ENCODE measurements at regions of chr4 and their contacts with region 1.

Region 1: GRCh38 chr4:4395849-4396637 is 9.1 kb downstream of the NSG1 start:
- DNase-seq: no peak
- ATAC-seq: no peak
- H3K4me3 ChIP-seq: no peak overlapping the region
- H3K4me3 Mint-ChIP-seq: no peak overlapping the region
- H3K27ac ChIP-seq: no peak overlapping the region
- H3K27ac Mint-ChIP-seq: no peak overlapping the region
- H3K4me1 ChIP-seq: no peaks in the 10 kb centered on the region
- H3K4me1 Mint-ChIP-seq: peaks cover 5% of the 10 kb centered on the region
- H3K27me3 ChIP-seq: no peaks in the 10 kb centered on the region
- H3K27me3 Mint-ChIP-seq: no peaks in the 10 kb centered on the region
- CTCF ChIP-seq: no peak

Region 2: DNA sequence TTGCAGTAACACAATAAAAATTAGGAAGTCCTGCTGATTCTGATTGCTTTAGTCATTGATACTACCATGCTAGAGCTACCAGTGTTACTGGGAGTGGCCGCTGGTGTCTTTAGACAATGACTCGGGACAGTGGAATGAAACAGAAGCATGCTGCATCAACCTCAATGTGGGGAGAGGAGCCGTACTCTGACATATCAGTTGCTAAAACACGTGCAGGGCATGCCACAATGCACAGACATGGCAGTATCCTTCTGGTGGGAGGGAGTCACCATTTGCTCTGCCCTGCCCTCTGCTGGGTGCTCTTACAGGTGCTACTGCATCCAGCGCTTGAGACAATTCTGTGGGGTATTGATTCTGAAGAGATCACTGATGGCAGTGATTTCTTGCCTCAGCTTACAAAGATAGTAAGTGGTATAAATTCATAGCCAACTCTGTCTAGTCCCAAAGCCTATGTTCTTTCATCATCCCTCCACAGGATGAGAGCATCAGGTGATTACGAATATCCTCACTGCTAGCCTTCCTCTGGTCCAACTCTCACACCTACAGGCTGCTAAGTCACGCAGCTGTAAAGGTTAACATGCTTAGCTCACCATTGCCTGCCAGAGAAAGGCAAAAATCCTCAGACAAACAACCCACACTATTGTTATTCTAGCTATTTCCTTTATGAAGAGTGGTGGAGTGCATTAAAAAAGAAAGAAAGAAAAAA is 34.6 kb after region 1 on chr4:
- CTCF ChIA-PET with region 1: no interaction called
- POLR2A ChIA-PET with region 1: no interaction called
- intact Hi-C with region 1: loop called in 1 of 2 experiments (anchors 5 kb)
- DNase-seq: peak in 13 of 14 experiments; percentile 19 to 73 (median 47)
- ATAC-seq: peak; percentile 99
- H3K4me3 ChIP-seq: no peak overlapping the region
- H3K4me3 Mint-ChIP-seq: no peak overlapping the region
- H3K27ac ChIP-seq: no peak overlapping the region
- H3K27ac Mint-ChIP-seq: no peak overlapping the region
- H3K4me1 ChIP-seq: peaks cover 4% of the 10 kb centered on the region
- H3K4me1 Mint-ChIP-seq: peaks cover 16% of the 10 kb centered on the region
- H3K27me3 ChIP-seq: no peaks in the 10 kb centered on the region
- H3K27me3 Mint-ChIP-seq: no peaks in the 10 kb centered on the region
- CTCF ChIP-seq: peak; percentile 74

Region 3: GRCh38 chr4:4439782-4440181 is 43.7 kb after region 1 on chr4:
- CTCF ChIA-PET with region 1: no interaction called
- POLR2A ChIA-PET with region 1: no interaction called
- intact Hi-C with region 1: loop called in 1 of 2 experiments (anchors 1 kb)
- DNase-seq: no peak
- ATAC-seq: no peak
- H3K4me3 ChIP-seq: no peak overlapping the region
- H3K4me3 Mint-ChIP-seq: no peak overlapping the region
- H3K27ac ChIP-seq: no peak overlapping the region
- H3K27ac Mint-ChIP-seq: no peak overlapping the region
- H3K4me1 ChIP-seq: no peaks in the 10 kb centered on the region
- H3K4me1 Mint-ChIP-seq: no peaks in the 10 kb centered on the region
- H3K27me3 ChIP-seq: no peaks in the 10 kb centered on the region
- H3K27me3 Mint-ChIP-seq: no peaks in the 10 kb centered on the region
- CTCF ChIP-seq: no peak

Measured in CD4-positive, alpha-beta T cell (primary cell).